Caco-2 (cell line): ENCODE measurements at regions of chr6 and their contacts with region 1.

Region 1: GRCh38 chr6:81241126-81242041 is 511.1 kb downstream of the TENT5A start:
- DNase-seq: peak in 1 of 2 experiments; percentile 38
- H3K4me3 ChIP-seq: no peak overlapping the region
- H3K4me3 Mint-ChIP-seq: no peak overlapping the region
- H3K27ac Mint-ChIP-seq: no peak overlapping the region
- H3K4me1 ChIP-seq: no peaks in the 10 kb centered on the region
- H3K4me1 Mint-ChIP-seq: no peaks in the 10 kb centered on the region
- H3K27me3 ChIP-seq: no peaks in the 10 kb centered on the region
- H3K27me3 Mint-ChIP-seq: peaks cover 3% of the 10 kb centered on the region
- CTCF ChIP-seq: peak; percentile 34 to 41

Region 2: DNA sequence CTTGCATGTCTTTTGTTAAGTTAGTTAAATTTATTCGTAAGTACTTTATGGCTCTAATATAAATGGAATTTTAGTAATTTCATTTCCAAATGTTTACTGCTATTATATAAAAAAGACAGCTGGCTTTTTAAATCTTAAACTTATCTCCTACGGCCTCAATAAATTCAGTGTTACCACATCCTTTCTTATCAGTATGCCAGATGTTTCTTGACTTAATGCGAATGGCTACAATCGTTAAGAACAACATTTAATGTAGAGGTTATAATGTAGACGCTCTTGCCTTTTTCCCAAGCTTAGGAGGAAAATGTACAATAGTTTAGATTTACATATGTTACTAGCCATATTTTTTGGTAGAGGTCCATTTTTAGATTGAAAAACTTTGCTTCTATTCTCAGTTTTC is 148.3 kb before region 1 on chr6:
- CTCF ChIA-PET with region 1: no interaction called
- POLR2A ChIA-PET with region 1: no interaction called
- intact Hi-C with region 1: no loop called
- DNase-seq: no peak
- H3K4me3 ChIP-seq: no peak overlapping the region
- H3K4me3 Mint-ChIP-seq: no peak overlapping the region
- H3K27ac Mint-ChIP-seq: no peak overlapping the region
- H3K4me1 ChIP-seq: no peaks in the 10 kb centered on the region
- H3K4me1 Mint-ChIP-seq: no peaks in the 10 kb centered on the region
- H3K27me3 ChIP-seq: no peaks in the 10 kb centered on the region
- H3K27me3 Mint-ChIP-seq: no peaks in the 10 kb centered on the region
- CTCF ChIP-seq: no peak

Region 3: GRCh38 chr6:81465859-81466258 is 224.5 kb after region 1 on chr6:
- CTCF ChIA-PET with region 1: no interaction called
- POLR2A ChIA-PET with region 1: no interaction called
- intact Hi-C with region 1: loop called (anchors 5 kb)
- DNase-seq: peak in 1 of 2 experiments; percentile 30
- H3K4me3 ChIP-seq: no peak overlapping the region
- H3K4me3 Mint-ChIP-seq: no peak overlapping the region
- H3K27ac Mint-ChIP-seq: no peak overlapping the region
- H3K4me1 ChIP-seq: no peaks in the 10 kb centered on the region
- H3K4me1 Mint-ChIP-seq: no peaks in the 10 kb centered on the region
- H3K27me3 ChIP-seq: no peaks in the 10 kb centered on the region
- H3K27me3 Mint-ChIP-seq: no peaks in the 10 kb centered on the region
- CTCF ChIP-seq: peak; percentile 51 to 75

Region 4: GRCh38 chr6:81844686-81845085 is 603.3 kb after region 1 on chr6:
- CTCF ChIA-PET with region 1: no interaction called
- POLR2A ChIA-PET with region 1: no interaction called
- intact Hi-C with region 1: loop called (anchors 10 kb)
- DNase-seq: no peak
- H3K4me3 ChIP-seq: no peak overlapping the region
- H3K4me3 Mint-ChIP-seq: no peak overlapping the region
- H3K27ac Mint-ChIP-seq: no peak overlapping the region
- H3K4me1 ChIP-seq: peaks cover 49% of the 10 kb centered on the region
- H3K4me1 Mint-ChIP-seq: peaks cover 10% of the 10 kb centered on the region
- H3K27me3 ChIP-seq: no peaks in the 10 kb centered on the region
- H3K27me3 Mint-ChIP-seq: no peaks in the 10 kb centered on the region
- CTCF ChIP-seq: no peak